Common myeloid progenitor, CD34-positive (primary cell): ENCODE measurements at regions of chr7 and their contacts with region 1.

Region 1: GRCh38 chr7:3092468-3092867 is 48.8 kb upstream of the CARD11 start:
- DNase-seq: peak; percentile 78 to 94 (median 93)
- H3K4me3 ChIP-seq: peak overlapping the region in 1 of 7 experiments; percentile 17
- H3K27ac ChIP-seq: no peak overlapping the region
- H3K4me1 ChIP-seq: peaks cover 12 to 49% (median 41%) of the 10 kb centered on the region in 4 experiments
- H3K27me3 ChIP-seq: no peaks in the 10 kb centered on the region

Region 2: GRCh38 chr7:3065724-3066143 is 26.7 kb before region 1 on chr7:
- CTCF ChIA-PET with region 1: interaction called, 12 read pairs
- POLR2A ChIA-PET with region 1: no interaction called
- DNase-seq: peak; percentile 44 to 59 (median 54)
- H3K4me3 ChIP-seq: no peak overlapping the region
- H3K27ac ChIP-seq: no peak overlapping the region
- H3K4me1 ChIP-seq: peaks cover 0 to 30% (median 18%) of the 10 kb centered on the region in 4 experiments
- H3K27me3 ChIP-seq: no peaks in the 10 kb centered on the region

Region 3: DNA sequence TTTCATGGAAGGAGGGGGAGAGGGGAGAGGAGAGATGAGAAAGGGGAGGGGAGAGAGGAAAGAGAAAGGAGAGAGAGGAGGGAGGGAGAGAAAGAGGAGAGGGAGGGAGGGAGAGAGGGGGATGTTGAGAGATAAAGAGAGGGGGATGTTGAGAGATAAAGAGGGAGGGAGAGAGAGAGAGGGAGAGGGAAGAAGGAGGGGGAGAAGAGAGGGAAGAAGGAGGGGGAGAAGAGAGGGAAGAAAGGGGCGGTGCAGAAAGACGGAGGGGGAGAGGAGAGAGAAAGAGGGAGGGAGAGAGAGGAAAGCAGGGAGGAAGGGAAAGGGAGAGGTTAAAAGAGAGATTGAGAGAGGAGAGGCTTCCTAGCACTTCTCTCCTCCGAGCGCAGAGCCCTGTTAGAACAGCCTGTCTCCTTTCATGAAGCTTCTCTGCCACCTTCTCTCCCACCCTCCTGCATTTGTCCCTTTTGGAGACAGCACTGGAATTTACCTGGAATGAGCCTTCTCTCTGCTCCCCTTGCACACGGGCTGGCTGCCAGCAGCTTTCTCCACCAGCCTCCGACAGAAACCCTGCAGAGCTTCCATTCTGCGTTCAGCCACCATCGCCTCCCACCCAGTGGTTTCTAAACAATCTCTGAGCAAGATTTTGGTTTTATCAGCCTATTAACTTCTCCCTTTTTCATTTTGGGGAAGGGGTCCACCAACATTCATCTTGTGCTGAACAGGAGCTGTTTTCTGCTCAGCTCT is 25.2 kb after region 1 on chr7:
- CTCF ChIA-PET with region 1: interaction called, 24 read pairs
- POLR2A ChIA-PET with region 1: interaction called, 3 read pairs
- DNase-seq: peak; percentile 21 to 67 (median 67)
- H3K4me3 ChIP-seq: no peak overlapping the region
- H3K27ac ChIP-seq: no peak overlapping the region
- H3K4me1 ChIP-seq: peaks cover 4 to 35% (median 33%) of the 10 kb centered on the region in 4 experiments
- H3K27me3 ChIP-seq: no peaks in the 10 kb centered on the region

Region 4: DNA sequence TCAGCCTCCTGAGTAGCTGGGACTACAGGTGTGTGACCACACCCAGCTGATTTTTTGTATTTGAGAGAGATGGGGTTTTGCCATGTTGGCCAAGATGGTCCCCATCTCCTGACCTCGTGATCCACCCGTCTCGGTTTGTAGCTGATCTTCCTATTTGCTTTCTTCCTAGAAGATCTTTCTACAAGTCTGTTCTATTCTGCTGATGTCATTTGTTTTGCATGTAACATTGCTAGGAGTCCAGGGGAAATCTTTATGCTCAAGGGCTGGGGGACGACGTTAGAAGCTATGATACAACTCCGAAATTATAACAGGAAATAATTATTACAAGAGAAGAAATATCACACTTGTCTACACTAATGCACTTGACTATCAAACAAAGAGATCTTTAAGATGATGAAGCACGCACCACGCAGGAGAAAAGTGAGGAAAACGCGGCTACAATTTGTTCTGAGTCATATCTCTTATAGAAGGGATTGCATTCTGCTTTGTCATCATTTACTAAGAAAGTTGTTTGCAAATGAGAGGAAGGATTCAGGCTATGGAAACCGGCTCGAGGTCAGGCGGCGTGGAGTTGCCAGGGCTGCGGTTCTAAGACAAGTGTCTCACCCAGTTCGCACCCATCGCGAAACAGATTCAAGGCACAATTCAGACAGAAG is 54.2 kb after region 1 on chr7:
- CTCF ChIA-PET with region 1: interaction called, 18 read pairs
- POLR2A ChIA-PET with region 1: no interaction called
- DNase-seq: peak; percentile 70 to 94 (median 88)
- H3K4me3 ChIP-seq: peak overlapping the region in 2 of 7 experiments; percentile 2 to 45
- H3K27ac ChIP-seq: no peak overlapping the region
- H3K4me1 ChIP-seq: peaks cover 2 to 40% (median 36%) of the 10 kb centered on the region in 4 experiments
- H3K27me3 ChIP-seq: no peaks in the 10 kb centered on the region